T-cell (primary cell): ENCODE measurements at regions of chr3 and their contacts with region 1.

Region 1: DNA sequence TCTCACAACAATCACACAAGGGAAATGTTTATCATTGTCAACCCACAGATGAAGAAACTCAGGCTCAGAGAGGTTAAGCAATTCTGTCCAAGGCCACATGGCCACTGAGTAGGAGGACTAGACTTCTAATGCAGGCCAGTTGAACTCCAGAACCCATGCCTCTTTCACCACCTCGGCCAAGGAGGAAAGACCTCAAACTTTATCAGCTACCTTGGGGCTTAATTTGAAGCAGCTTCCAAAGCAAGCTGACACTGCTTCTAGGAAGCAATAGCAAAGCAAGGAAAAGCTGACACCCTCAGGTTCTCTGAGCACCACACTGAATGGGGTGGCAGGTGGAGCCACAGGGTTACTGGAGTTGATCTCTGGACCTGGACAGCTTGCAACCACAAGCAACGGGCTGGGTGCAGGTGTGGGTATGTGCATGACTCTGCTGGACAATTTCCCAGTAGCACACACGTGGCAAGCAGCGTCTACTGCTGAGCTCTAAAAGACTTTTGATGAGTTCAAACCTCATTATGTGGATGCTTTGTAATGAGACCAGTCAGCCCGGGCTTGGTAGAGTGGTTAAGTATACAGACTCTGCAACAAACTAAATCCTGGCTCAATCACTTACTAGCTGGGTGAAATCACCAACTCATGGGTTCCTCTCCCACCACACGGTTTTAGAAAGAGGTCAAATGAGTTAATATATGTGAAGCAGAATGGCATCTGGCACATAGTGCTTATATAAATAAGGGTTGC is 23.1 kb downstream of the CCNL1 start:
- DNase-seq: no peak
- ATAC-seq: peak in 1 of 4 experiments; percentile 8
- H3K4me3 ChIP-seq: no peak overlapping the region
- H3K4me3 Mint-ChIP-seq: no peak overlapping the region
- H3K27ac ChIP-seq: no peak overlapping the region
- H3K27ac Mint-ChIP-seq: peak overlapping the region; percentile 55 to 69
- H3K4me1 ChIP-seq: peaks cover 0 to 28% of the 10 kb centered on the region in 2 experiments
- H3K4me1 Mint-ChIP-seq: peaks cover 7 to 46% (median 40%) of the 10 kb centered on the region in 3 donors
- H3K27me3 ChIP-seq: no peaks in the 10 kb centered on the region
- H3K27me3 Mint-ChIP-seq: no peaks in the 10 kb centered on the region

Region 2: DNA sequence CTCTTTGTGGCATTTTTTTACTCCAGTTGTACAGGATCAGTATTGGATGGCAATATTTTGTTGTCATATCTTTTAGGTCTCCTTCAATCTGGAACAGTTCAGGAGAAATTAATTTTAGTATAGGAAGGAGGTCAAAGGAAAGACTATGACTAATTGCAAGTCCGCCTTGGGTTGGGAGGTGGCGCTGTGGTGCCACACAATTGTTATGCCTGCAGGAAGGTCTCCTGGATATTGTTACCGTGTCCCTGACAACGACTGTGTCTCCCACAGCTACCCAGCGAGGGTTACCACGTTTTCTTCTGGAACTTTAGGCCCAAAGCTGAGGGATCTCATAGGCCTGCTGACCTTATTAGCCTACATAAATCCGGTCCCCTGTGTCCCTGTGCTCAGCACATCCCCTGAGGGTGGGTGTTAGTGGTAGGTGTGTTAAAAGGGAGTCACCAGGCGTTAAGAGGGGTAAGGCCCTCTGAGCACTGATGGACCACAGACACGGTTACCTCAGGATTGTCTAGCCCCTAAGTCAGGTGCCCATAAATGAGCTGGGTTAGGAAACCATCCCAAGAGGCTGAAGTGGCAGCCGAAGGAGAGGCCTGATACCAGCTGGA is 984.9 kb before region 1 on chr3:
- CTCF ChIA-PET with region 1: interaction called, 7 to 10 read pairs
- POLR2A ChIA-PET with region 1: no interaction called
- DNase-seq: peak; percentile 5 to 70 (median 39)
- ATAC-seq: peak; percentile 38 to 69 (median 53)
- H3K4me3 ChIP-seq: no peak overlapping the region
- H3K4me3 Mint-ChIP-seq: no peak overlapping the region
- H3K27ac ChIP-seq: no peak overlapping the region
- H3K27ac Mint-ChIP-seq: no peak overlapping the region
- H3K4me1 ChIP-seq: no peaks in the 10 kb centered on the region
- H3K4me1 Mint-ChIP-seq: peaks cover 0 to 5% (median 2%) of the 10 kb centered on the region in 3 donors
- H3K27me3 ChIP-seq: no peaks in the 10 kb centered on the region
- H3K27me3 Mint-ChIP-seq: peaks cover 0 to 6% of the 10 kb centered on the region in 2 donors

Region 3: GRCh38 chr3:157061265-157061664 is 75.6 kb before region 1 on chr3:
- CTCF ChIA-PET with region 1: no interaction called
- POLR2A ChIA-PET with region 1: no interaction called
- DNase-seq: no peak
- ATAC-seq: no peak
- H3K4me3 ChIP-seq: no peak overlapping the region
- H3K4me3 Mint-ChIP-seq: no peak overlapping the region
- H3K27ac ChIP-seq: no peak overlapping the region
- H3K27ac Mint-ChIP-seq: no peak overlapping the region
- H3K4me1 ChIP-seq: peaks cover under 1 to 10% of the 10 kb centered on the region in 2 experiments
- H3K4me1 Mint-ChIP-seq: peaks cover 8 to 12% (median 9%) of the 10 kb centered on the region in 3 donors
- H3K27me3 ChIP-seq: no peaks in the 10 kb centered on the region
- H3K27me3 Mint-ChIP-seq: peaks cover 5 to 10% of the 10 kb centered on the region in 2 donors

Region 4: GRCh38 chr3:157081681-157082210 is 55.1 kb before region 1 on chr3:
- CTCF ChIA-PET with region 1: interaction called, 14 to 35 read pairs
- POLR2A ChIA-PET with region 1: interaction called in 1 of 2 experiments, 4 read pairs
- DNase-seq: peak; percentile 54 to 89 (median 77)
- ATAC-seq: peak; percentile 89 to 95 (median 93)
- H3K4me3 ChIP-seq: no peak overlapping the region
- H3K4me3 Mint-ChIP-seq: no peak overlapping the region
- H3K27ac ChIP-seq: peak overlapping the region; percentile 75
- H3K27ac Mint-ChIP-seq: peak overlapping the region; percentile 78 to 84
- H3K4me1 ChIP-seq: peaks cover 0 to 16% of the 10 kb centered on the region in 2 experiments
- H3K4me1 Mint-ChIP-seq: peaks cover 13 to 34% (median 23%) of the 10 kb centered on the region in 3 donors
- H3K27me3 ChIP-seq: peaks cover 0 to 4% of the 10 kb centered on the region in 2 experiments
- H3K27me3 Mint-ChIP-seq: no peaks in the 10 kb centered on the region

Region 5: GRCh38 chr3:157125101-157125500 is 11.7 kb before region 1 on chr3:
- CTCF ChIA-PET with region 1: interaction called, 11 to 13 read pairs
- POLR2A ChIA-PET with region 1: no interaction called
- DNase-seq: no peak
- ATAC-seq: no peak
- H3K4me3 ChIP-seq: no peak overlapping the region
- H3K4me3 Mint-ChIP-seq: no peak overlapping the region
- H3K27ac ChIP-seq: no peak overlapping the region
- H3K27ac Mint-ChIP-seq: peak overlapping the region in 1 of 2 donors; percentile 53
- H3K4me1 ChIP-seq: peaks cover 14 to 26% of the 10 kb centered on the region in 2 experiments
- H3K4me1 Mint-ChIP-seq: peaks cover 29 to 40% (median 38%) of the 10 kb centered on the region in 3 donors
- H3K27me3 ChIP-seq: no peaks in the 10 kb centered on the region
- H3K27me3 Mint-ChIP-seq: no peaks in the 10 kb centered on the region

Region 6: DNA sequence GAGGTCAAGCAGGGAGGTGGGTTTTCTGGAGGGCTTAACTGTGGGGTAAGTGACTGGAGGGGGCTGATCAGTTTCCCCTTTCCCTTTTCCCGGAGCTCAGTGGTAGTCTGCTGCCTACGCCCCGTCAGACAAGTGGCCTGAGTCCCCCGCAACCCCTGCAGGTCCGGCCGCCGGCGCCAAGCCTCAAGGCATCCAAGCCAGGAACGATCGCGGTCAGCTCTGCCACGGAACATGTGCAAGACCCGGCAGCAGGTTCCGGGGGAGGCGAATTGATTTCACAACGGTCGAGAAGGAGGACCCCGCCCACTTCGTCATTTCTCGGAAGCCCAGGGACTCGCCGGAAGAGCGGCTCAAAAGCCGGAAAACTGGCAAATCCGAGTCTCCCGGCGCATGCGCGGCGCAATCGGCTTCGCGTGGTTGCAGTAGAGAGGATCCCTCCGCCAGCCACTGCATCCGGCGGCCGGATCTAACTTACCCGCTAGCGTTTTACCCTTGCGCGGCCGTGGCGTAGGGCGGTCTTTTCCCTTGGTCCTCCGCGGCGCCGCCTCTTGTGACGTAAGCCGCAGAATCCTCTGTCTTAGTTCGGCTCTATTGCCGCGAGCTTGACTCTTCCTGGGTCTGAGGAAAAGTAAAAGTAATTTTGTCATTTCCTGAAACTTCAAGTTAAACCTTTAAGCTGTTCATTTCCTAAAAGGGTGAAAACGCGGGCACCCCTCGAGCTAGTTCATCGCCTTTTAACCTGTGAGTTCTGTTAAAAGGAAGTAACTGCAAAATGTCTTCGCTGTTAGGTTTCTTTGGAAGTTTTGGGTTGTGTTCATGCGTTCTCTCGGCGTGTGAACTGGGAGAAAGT is 38.1 kb after region 1 on chr3:
- CTCF ChIA-PET with region 1: interaction called, 4 to 6 read pairs
- POLR2A ChIA-PET with region 1: interaction called, 3 to 10 read pairs
- DNase-seq: peak; percentile 90 to 99 (median 98)
- ATAC-seq: peak; percentile 93 to 96 (median 94)
- H3K4me3 ChIP-seq: peak overlapping the region; percentile 78 to 88
- H3K4me3 Mint-ChIP-seq: peak overlapping the region; percentile 90 to 95 (median 94)
- H3K27ac ChIP-seq: peak overlapping the region; percentile 99
- H3K27ac Mint-ChIP-seq: peak overlapping the region; percentile 96 to 100
- H3K4me1 ChIP-seq: peaks cover 5 to 24% of the 10 kb centered on the region in 2 experiments
- H3K4me1 Mint-ChIP-seq: peaks cover 30 to 33% (median 32%) of the 10 kb centered on the region in 3 donors
- H3K27me3 ChIP-seq: no peaks in the 10 kb centered on the region
- H3K27me3 Mint-ChIP-seq: peaks cover 0 to 4% of the 10 kb centered on the region in 2 donors